Sigmoid colon (tissue), 7 donors: ENCODE measurements at regions of chr2 and their contacts with region 1.

Region 1: DNA sequence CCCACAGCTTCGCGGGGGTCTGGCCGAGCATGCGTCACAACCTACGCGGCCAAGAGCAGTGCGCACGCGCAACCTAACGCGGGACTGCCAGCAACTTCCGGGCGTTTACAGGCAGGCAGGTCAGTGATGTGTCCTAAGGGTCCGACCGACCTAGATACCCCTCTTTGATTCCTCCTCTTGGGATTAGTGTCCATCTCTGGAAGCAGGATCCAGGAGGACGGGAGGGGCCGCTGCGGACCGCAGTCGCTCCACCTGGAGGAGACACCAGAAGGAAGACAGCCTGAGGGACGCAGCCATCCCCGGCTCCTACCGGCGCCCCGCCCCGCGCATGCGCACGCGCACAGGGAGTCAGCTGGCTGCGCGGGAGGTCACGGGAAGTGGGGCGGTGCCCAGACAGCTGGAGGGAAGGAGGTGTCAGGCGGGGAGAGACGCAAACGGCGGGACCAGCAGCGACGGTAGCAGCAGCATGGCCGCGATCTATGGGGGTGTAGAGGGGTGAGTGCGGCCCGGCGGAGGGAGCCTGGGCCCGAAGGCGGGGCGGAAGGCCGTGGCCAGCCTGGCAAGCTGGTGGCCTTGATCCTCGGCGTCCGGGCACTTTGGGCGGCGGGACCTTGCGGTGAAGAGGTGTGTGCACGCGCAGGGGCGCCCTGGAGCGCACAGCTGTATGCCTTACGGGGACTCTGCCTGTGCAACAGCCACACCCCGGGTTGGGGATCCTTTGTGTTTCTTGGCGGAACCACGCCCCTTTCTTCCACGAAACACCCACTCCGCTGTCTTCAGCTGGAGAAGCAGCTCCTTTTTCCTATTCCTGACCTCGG is at the start of gene NAGK:
- DNase-seq: peak; percentile 99
- H3K4me3 ChIP-seq: peak within 1 kb of the TSS; percentile 79 to 89 (median 80)
- H3K27ac ChIP-seq: peak within 1 kb of the TSS; percentile 92 to 96 (median 94)
- H3K4me1 ChIP-seq: peaks cover 0 to 38% (median 34%) of the 10 kb centered on the region in 4 donors
- H3K27me3 ChIP-seq: no peaks in the 10 kb centered on the region
- CTCF ChIP-seq: no peak
- EP300 ChIP-seq: peak in 2 of 4 donors; percentile 14 to 82
- POLR2A ChIP-seq: peak; percentile 100
- total RNA-seq, gene NAGK: 36.3 to 73.2 (median 64.2) TPM

Region 2: DNA sequence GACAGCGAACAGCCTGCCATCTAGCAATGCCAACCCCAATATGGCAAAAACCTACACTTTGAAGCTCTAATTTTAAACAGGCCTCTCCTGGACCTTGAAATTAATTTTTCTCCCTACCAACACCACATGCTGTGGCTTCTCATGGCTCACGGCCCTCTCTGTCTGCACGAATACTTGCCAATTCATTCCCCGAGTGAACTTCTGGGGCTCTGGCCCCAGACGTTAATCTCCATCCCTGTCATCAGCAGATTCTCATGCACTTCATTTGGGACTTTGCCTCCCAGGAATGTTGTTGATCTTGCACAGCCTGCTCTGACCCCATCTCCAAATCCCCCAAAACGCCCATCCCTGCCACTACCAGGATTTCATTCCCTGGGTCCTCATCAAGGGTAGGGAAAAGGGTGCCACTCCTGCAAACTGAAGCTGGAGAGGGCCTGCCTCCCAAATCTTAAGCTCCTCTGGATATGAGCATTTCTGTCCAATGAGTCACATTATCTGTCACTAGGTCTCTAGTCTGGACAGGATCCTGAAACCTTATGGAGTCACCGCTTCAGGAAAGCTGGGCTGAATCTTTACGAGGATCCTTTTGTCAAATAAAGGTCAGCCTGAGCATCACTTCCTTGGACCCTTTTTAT is 288.4 kb before region 1 on chr2:
- intact Hi-C with region 1: no loop called
- DNase-seq: no peak
- H3K4me3 ChIP-seq: no peak overlapping the region
- H3K27ac ChIP-seq: no peak overlapping the region
- H3K4me1 ChIP-seq: no peaks in the 10 kb centered on the region
- H3K27me3 ChIP-seq: peaks cover 0 to 7% (median 0%) of the 10 kb centered on the region in 3 donors
- CTCF ChIP-seq: no peak
- EP300 ChIP-seq: no peak
- POLR2A ChIP-seq: no peak

Region 3: DNA sequence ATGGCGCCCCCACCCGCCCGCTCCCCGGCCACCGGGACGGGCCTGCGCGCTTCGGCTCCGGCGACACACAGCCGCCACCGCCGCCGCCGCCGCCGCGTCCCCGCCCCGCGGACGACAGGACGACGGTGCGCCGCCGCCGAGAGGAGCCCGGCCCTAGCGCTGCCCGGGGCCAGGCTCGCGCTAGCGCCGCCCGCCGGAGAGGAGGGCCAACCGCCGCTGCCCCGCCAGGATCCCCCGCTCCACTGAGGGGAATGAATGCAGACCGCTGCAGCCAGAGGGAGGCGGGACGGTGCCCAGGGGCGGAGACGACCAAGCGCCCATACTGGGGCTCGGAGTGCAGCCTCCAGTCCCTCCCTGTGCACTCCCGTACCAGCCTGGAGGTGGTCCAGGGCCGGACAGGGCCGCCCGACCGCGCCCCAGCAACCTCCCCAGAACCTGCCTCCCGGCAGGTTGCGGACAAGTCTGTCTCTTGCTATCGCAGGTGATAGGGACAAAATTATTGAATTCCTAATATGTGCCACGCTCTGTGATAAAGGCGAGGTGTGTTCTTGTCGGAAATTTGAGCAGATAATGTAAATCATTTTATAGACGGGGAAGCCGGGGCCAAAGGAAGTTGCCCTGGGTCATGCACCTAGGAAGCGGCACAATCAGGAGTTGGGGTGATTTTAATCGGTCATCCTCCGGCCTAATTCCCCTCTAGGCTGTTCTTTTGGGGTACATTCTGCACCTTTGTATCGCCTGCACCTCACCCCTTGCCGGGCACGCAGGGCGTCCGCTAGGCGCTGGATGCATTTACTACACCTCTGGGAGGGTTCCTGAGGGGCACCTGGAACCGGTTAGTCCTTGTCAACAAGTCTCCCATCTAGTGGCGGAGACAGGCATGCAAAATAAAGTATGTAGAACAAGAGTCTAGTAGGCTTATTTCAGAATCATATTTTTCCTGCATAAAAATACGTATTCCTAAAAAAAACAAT is 73.4 kb before region 1 on chr2 and contains the start of gene TEX261:
- intact Hi-C with region 1: loop called (anchors 2 kb)
- DNase-seq: peak; percentile 93
- H3K4me3 ChIP-seq: peak within 1 kb of the TSS; percentile 97 to 99 (median 98)
- H3K27ac ChIP-seq: peak within 1 kb of the TSS; percentile 82 to 87 (median 84)
- H3K4me1 ChIP-seq: peaks cover 0 to 33% (median 26%) of the 10 kb centered on the region in 4 donors
- H3K27me3 ChIP-seq: no peaks in the 10 kb centered on the region
- CTCF ChIP-seq: peak; percentile 8 to 69 (median 34)
- EP300 ChIP-seq: no peak
- POLR2A ChIP-seq: no peak
- total RNA-seq, gene TEX261: 19.5 to 26.5 (median 22.8) TPM

Region 4: GRCh38 chr2:71130113-71130904 is 61.9 kb after region 1 on chr2 and contains the starts of genes MCEE and MPHOSPH10:
- intact Hi-C with region 1: loop called (anchors 2 kb)
- DNase-seq: peak; percentile 94
- H3K4me3 ChIP-seq: peak within 1 kb of the TSS; percentile 68 to 87 (median 80)
- H3K27ac ChIP-seq: peak within 1 kb of the TSS; percentile 88 to 95 (median 92)
- H3K4me1 ChIP-seq: peaks cover 0 to 37% (median 29%) of the 10 kb centered on the region in 4 donors
- H3K27me3 ChIP-seq: no peaks in the 10 kb centered on the region
- CTCF ChIP-seq: no peak
- EP300 ChIP-seq: no peak
- POLR2A ChIP-seq: peak; percentile 29 to 52
- total RNA-seq, gene MCEE: 8.1 to 23.5 (median 15.5) TPM
- total RNA-seq, gene MPHOSPH10: 21.0 to 27.1 (median 24.0) TPM

Region 5: GRCh38 chr2:71190656-71191569 is 122.5 kb after region 1 on chr2:
- intact Hi-C with region 1: no loop called
- DNase-seq: no peak
- H3K4me3 ChIP-seq: no peak overlapping the region
- H3K27ac ChIP-seq: no peak overlapping the region
- H3K4me1 ChIP-seq: no peaks in the 10 kb centered on the region
- H3K27me3 ChIP-seq: no peaks in the 10 kb centered on the region
- CTCF ChIP-seq: no peak
- EP300 ChIP-seq: no peak
- POLR2A ChIP-seq: no peak